Aorta (tissue), 5 donors: ENCODE measurements at regions of chr11 and their contacts with region 1.

Region 1: DNA sequence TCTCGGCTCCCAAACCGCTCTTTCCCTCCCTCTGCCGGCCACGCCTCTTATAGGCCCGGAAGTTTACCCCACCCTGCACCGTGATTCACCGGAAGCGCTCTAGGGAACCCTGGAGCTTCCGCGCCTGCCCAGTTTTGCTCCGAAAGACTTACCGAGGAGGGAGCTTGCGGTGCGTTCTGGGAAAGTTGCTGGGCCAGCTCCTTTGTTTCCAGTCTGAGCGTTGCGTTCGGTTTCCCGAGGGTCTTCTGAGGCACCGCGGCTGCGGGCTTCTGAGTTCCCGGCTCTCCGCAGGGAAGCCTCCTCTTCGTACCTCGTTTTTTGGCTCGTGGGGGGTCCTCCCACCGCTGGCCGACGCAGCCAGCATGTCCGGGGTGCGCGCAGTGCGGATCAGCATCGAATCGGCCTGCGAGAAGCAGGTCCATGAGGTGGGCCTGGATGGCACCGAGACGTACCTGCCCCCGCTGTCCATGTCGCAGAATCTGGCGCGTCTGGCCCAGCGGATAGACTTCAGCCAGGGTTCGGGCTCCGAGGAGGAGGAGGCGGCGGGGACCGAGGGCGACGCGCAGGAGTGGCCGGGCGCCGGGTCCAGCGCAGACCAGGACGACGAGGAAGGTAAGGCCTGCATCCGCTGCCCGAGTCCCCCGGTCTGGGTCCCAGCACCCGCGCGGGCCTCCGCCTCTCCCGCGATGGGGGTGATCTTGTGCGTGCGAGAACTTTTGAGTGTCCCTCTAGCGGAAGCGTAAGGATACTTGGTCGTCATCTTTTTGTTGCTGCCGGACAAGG is at the start of gene MED17:
- DNase-seq: peak; percentile 95 to 97
- ATAC-seq: peak; percentile 99
- H3K4me3 ChIP-seq: peak within 1 kb of the TSS; percentile 60 to 88
- H3K27ac ChIP-seq: peak within 1 kb of the TSS; percentile 58 to 60
- H3K4me1 ChIP-seq: peaks cover 0 to 3% of the 10 kb centered on the region in 2 donors
- H3K27me3 ChIP-seq: no peaks in the 10 kb centered on the region
- total RNA-seq, gene MED17: 30.9 to 33.1 TPM

Region 2: GRCh38 chr11:93662177-93662575 is 122.2 kb before region 1 on chr11:
- intact Hi-C with region 1: loop called in 1 of 2 experiments (anchors 10 kb)
- DNase-seq: no peak
- ATAC-seq: no peak
- H3K4me3 ChIP-seq: peak overlapping the region; percentile 69 to 96
- H3K27ac ChIP-seq: peak overlapping the region in 1 of 2 donors; percentile 9
- H3K4me1 ChIP-seq: peaks cover 1 to 4% of the 10 kb centered on the region in 2 donors
- H3K27me3 ChIP-seq: no peaks in the 10 kb centered on the region

Region 3: DNA sequence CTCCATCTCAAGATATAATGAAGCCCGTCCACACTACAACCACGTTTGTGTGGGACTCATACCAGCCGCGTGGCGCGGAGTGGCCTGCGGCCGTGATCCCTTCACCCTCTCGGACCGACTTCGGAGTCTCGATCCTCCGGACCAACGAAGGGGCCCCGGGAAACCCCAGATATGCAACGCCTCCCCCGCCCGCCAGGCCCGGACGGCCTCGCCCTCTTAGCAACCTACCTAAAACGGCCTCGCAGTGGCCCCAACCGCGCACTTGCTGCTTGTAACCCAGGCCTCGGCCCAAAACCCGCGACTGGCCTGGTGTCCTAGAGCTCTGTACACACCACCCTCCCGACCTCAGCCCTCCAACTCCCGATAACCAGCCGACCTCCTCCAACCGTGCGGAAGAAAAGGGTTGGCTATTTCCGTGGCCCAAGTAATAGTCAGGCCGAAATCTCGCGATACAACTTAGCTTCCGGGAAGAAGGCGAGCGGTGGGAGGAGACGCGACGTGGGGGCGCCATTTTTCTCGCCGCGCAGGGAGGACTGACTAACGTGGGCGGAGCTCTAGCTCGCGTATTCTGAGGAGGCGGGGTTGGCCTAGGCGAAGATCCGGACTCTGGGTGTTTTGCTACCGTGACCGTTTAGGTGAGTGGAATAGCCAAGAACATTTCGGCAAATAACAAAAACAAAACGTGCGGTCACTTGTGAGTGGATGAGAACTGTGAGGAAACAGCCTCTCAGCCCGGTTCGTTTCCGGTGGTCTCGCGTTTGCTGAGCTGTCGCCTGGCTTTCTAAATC is 43.1 kb before region 1 on chr11 and contains the starts of genes C11orf54 and TAF1D:
- intact Hi-C with region 1: loop called (anchors 2 to 5 kb)
- DNase-seq: peak; percentile 98 to 99
- ATAC-seq: peak; percentile 98
- H3K4me3 ChIP-seq: peak within 1 kb of the TSS; percentile 69 to 72
- H3K27ac ChIP-seq: peak within 1 kb of the TSS; percentile 50 to 91
- H3K4me1 ChIP-seq: no peaks in the 10 kb centered on the region
- H3K27me3 ChIP-seq: no peaks in the 10 kb centered on the region
- total RNA-seq, gene C11orf54: 26.3 to 31.2 TPM
- total RNA-seq, gene TAF1D: 110 to 111 TPM